Activated CD4-positive, alpha-beta T cell treated with anti-CD3 and anti-CD28 coated beads, Interleukin-2, amount 10 ng/mL, durations not matched to agents 24 days and 14 days (primary cell): ENCODE measurements at regions of chr3 and their contacts with region 1.

Region 1: DNA sequence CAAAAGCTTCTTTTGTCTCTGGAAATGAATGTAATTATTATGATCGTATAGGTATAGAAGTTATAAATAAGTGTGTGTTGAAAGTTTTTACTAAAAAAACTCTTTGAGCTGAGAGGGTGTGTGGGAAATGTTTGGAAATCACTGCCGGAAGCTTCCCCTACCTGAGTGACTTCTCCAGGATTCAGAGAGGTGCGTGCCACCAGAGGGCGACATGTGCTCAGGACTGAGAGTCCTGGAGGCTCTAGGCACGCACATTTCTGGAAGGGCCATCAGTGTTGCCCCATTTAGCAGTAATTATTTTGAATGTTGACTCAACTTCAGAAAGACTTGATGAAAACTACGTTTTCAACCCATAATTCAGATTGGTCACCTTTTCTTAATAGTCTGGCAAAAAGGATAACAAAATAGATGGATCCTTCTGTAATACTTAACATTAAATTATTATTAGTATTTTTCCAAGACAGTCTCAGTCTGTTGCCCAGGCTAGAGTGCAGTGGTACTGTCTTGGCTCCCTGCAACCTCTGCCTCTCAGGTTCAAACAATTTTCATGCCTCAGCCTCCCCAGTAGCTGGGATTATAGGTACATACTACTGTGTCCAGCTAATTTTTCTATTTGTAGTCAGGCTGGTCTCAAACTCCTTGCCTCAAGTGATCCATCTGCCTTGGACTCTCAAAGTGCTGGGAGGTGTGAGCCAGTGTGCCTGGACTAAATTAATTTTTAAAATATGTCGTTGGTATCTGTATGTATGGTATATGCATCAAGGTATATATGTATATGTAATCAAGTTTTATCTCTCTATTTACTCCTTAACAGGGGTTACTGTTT is 34.5 kb downstream of the GPR171 start:
- DNase-seq: peak; percentile 94
- H3K4me3 Mint-ChIP-seq: no peak overlapping the region
- H3K27ac Mint-ChIP-seq: no peak overlapping the region
- H3K4me1 Mint-ChIP-seq: peaks cover 41% of the 10 kb centered on the region
- H3K27me3 Mint-ChIP-seq: peaks cover 1% of the 10 kb centered on the region

Region 2: GRCh38 chr3:151146071-151146730 is 22.3 kb before region 1 on chr3:
- intact Hi-C with region 1: no loop called
- DNase-seq: peak; percentile 86
- H3K4me3 Mint-ChIP-seq: no peak overlapping the region
- H3K27ac Mint-ChIP-seq: no peak overlapping the region
- H3K4me1 Mint-ChIP-seq: no peaks in the 10 kb centered on the region
- H3K27me3 Mint-ChIP-seq: peaks cover 29% of the 10 kb centered on the region

Region 3: DNA sequence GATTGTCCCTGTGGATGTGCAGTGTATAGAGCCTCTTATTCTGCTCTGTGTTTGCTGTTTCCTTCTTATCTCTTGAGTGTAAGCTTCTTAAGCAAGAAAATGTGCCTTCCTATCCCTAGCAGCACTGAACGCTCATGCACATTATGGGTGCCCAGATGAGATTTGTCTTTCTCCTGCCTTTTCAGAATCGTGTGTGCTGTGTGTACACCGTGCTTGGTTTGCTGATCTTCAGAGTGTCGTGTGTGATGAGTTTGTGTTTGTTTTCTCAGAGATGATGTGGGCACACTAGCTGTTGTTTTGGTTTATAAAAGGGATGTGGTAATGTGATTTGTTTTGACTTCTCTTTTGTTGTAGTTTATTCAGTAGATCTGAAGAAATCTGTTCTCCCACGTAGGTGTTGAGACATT is 14.8 kb after region 1 on chr3:
- intact Hi-C with region 1: loop called (anchors 2 kb)
- DNase-seq: peak; percentile 83
- H3K4me3 Mint-ChIP-seq: peak overlapping the region; percentile 74
- H3K27ac Mint-ChIP-seq: peak overlapping the region; percentile 85
- H3K4me1 Mint-ChIP-seq: peaks cover 46% of the 10 kb centered on the region
- H3K27me3 Mint-ChIP-seq: no peaks in the 10 kb centered on the region

Region 4: GRCh38 chr3:151210676-151211381 is 42.3 kb after region 1 on chr3:
- intact Hi-C with region 1: loop called (anchors 1 kb)
- DNase-seq: peak; percentile 75
- H3K4me3 Mint-ChIP-seq: peak overlapping the region; percentile 76
- H3K27ac Mint-ChIP-seq: peak overlapping the region; percentile 90
- H3K4me1 Mint-ChIP-seq: peaks cover 56% of the 10 kb centered on the region
- H3K27me3 Mint-ChIP-seq: no peaks in the 10 kb centered on the region

Region 5: GRCh38 chr3:151282921-151283320 is 114.4 kb after region 1 on chr3:
- intact Hi-C with region 1: loop called (anchors 1 kb)
- DNase-seq: peak; percentile 70
- H3K4me3 Mint-ChIP-seq: no peak overlapping the region
- H3K27ac Mint-ChIP-seq: peak overlapping the region; percentile 81
- H3K4me1 Mint-ChIP-seq: peaks cover 50% of the 10 kb centered on the region
- H3K27me3 Mint-ChIP-seq: no peaks in the 10 kb centered on the region

Region 6: GRCh38 chr3:151327571-151328198 is 159.2 kb after region 1 on chr3:
- intact Hi-C with region 1: loop called (anchors 5 kb)
- DNase-seq: no peak
- H3K4me3 Mint-ChIP-seq: no peak overlapping the region
- H3K27ac Mint-ChIP-seq: no peak overlapping the region
- H3K4me1 Mint-ChIP-seq: peaks cover 9% of the 10 kb centered on the region
- H3K27me3 Mint-ChIP-seq: peaks cover 30% of the 10 kb centered on the region

Region 7: GRCh38 chr3:151838583-151839312 is 670.3 kb after region 1 on chr3:
- intact Hi-C with region 1: loop called (anchors 5 kb)
- DNase-seq: peak; percentile 81
- H3K4me3 Mint-ChIP-seq: no peak overlapping the region
- H3K27ac Mint-ChIP-seq: no peak overlapping the region
- H3K4me1 Mint-ChIP-seq: no peaks in the 10 kb centered on the region
- H3K27me3 Mint-ChIP-seq: peaks cover 26% of the 10 kb centered on the region